ENCODE measurements at regions of chr13 and their contacts with region 1.

Region 1: GRCh38 chr13:76903544-76904162 is 17.4 kb upstream of the KCTD12 start:
- DNase-seq: peak; percentile 27 to 70
- ATAC-seq: peak in 7 of 8 donors; percentile 73 to 88 (median 83)
- H3K4me3 ChIP-seq: no peak overlapping the region
- H3K27ac ChIP-seq: no peak overlapping the region
- H3K4me1 ChIP-seq: peaks cover 0 to 4% (median 0%) of the 10 kb centered on the region in 9 donors
- H3K27me3 ChIP-seq: peaks cover 0 to 4% (median 0%) of the 10 kb centered on the region in 7 donors
- CTCF ChIP-seq: peak; percentile 92 to 100 (median 99)

Region 2: GRCh38 chr13:75691183-75691582 is 1212.5 kb before region 1 on chr13:
- intact Hi-C with region 1: loop called in 7 of 10 experiments (anchors 10 kb)
- DNase-seq: no peak
- ATAC-seq: no peak
- H3K4me3 ChIP-seq: no peak overlapping the region
- H3K27ac ChIP-seq: no peak overlapping the region
- H3K4me1 ChIP-seq: peaks cover 0 to 4% (median 0%) of the 10 kb centered on the region in 9 donors
- H3K27me3 ChIP-seq: no peaks in the 10 kb centered on the region
- CTCF ChIP-seq: no peak

Region 3: GRCh38 chr13:75876360-75877050 is 1027.1 kb before region 1 on chr13:
- intact Hi-C with region 1: loop called in 9 of 10 experiments (anchors 2 to 10 kb)
- DNase-seq: peak in 1 of 2 donors; percentile 64
- ATAC-seq: peak; percentile 71 to 92 (median 87)
- H3K4me3 ChIP-seq: no peak overlapping the region
- H3K27ac ChIP-seq: no peak overlapping the region
- H3K4me1 ChIP-seq: peaks cover 0 to 7% (median 0%) of the 10 kb centered on the region in 9 donors
- H3K27me3 ChIP-seq: no peaks in the 10 kb centered on the region
- CTCF ChIP-seq: peak; percentile 87 to 95 (median 89)

Region 4: GRCh38 chr13:76473552-76474134 is 430.0 kb before region 1 on chr13:
- intact Hi-C with region 1: loop called in 6 of 10 experiments (anchors 2 to 10 kb)
- DNase-seq: peak; percentile 18 to 79
- ATAC-seq: peak; percentile 88 to 98 (median 96)
- H3K4me3 ChIP-seq: no peak overlapping the region
- H3K27ac ChIP-seq: peak overlapping the region in 2 of 10 donors; percentile 21 to 53
- H3K4me1 ChIP-seq: peaks cover 0 to 21% (median 4%) of the 10 kb centered on the region in 9 donors
- H3K27me3 ChIP-seq: no peaks in the 10 kb centered on the region
- CTCF ChIP-seq: peak; percentile 77 to 92 (median 86)

Region 5: GRCh38 chr13:76822698-76823267 is 80.9 kb before region 1 on chr13:
- intact Hi-C with region 1: loop called in 1 of 10 experiments (anchors 5 kb)
- DNase-seq: no peak
- ATAC-seq: peak in 6 of 8 donors; percentile 30 to 71 (median 53)
- H3K4me3 ChIP-seq: no peak overlapping the region
- H3K27ac ChIP-seq: peak overlapping the region in 2 of 10 donors; percentile 21 to 52
- H3K4me1 ChIP-seq: peaks cover 0 to 22% (median 0%) of the 10 kb centered on the region in 9 donors
- H3K27me3 ChIP-seq: no peaks in the 10 kb centered on the region
- CTCF ChIP-seq: peak in 7 of 9 donors; percentile 18 to 56 (median 42)

Region 6: GRCh38 chr13:78409172-78409571 is 1505.5 kb after region 1 on chr13:
- intact Hi-C with region 1: no loop called
- DNase-seq: no peak
- ATAC-seq: no peak
- H3K4me3 ChIP-seq: no peak overlapping the region
- H3K27ac ChIP-seq: no peak overlapping the region
- H3K4me1 ChIP-seq: no peaks in the 10 kb centered on the region
- H3K27me3 ChIP-seq: peaks cover 0 to 6% (median 0%) of the 10 kb centered on the region in 7 donors
- CTCF ChIP-seq: no peak